Endothelial cell of umbilical vein (primary cell): ENCODE measurements at regions of chr20 and their contacts with region 1.

Region 1: GRCh38 chr20:63707549-63708300 is at the starts of genes ARFRP1 and ZGPAT:
- DNase-seq: peak; percentile 81
- H3K4me3 ChIP-seq: peak within 1 kb of the TSS; percentile 62 to 77 (median 70)
- H3K27ac ChIP-seq: peak within 1 kb of the TSS; percentile 29
- H3K4me1 ChIP-seq: peaks cover 14% of the 10 kb centered on the region
- H3K27me3 ChIP-seq: no peaks in the 10 kb centered on the region
- CTCF ChIP-seq: no peak
- POLR2A ChIP-seq: peak; percentile 44
- total RNA-seq, gene ARFRP1: 51.6 and 56.3 TPM in 2 replicates
- total RNA-seq, gene ZGPAT: 29.3 and 31.7 TPM in 2 replicates

Region 2: DNA sequence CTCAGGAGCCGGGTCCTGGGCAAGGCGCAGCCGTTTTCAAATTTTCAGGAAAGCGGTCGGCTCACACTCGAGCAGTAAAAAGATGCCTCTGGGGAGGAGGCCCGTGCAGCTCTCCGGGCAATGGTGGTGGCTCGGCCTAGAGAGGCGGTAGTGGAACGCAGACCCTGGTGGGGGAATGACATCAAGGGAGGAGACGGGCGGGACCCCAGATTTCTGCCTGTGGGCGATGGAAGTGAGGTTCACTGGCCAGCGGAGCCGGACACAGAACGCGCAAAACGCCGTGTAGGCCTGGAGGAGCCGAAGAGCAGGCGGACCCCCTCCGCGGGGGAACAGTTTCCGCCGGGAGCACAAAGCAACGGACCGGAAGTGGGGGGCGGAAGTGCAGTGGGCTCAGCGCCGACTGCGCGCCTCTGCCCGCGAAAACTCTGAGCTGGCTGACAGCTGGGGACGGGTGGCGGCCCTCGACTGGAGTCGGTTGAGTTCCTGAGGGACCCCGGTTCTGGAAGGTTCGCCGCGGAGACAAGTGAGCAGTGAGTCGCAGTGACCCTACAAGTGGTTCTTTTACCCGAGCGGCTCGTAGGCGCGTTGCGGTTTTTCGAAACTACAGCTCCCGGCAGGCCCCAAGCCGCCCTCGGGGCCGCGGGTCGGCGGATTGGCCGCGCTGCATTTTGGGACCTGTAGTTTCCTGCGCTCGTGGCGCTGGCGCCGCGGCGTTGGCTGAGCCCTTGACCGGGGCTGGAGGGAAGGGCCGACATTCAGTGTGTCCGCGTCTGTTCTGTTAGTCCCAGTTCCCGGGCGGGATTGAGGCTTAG is 49.6 kb before region 1 on chr20 and contains the start of gene RTEL1:
- CTCF ChIA-PET with region 1: interaction called, 8 read pairs
- POLR2A ChIA-PET with region 1: interaction called, 3 read pairs
- dilution Hi-C with region 1: no loop called
- intact Hi-C with region 1: loop called (anchors 2 kb)
- DNase-seq: peak; percentile 93
- H3K4me3 ChIP-seq: peak within 1 kb of the TSS; percentile 60 to 83 (median 62)
- H3K27ac ChIP-seq: peak within 1 kb of the TSS; percentile 50
- H3K4me1 ChIP-seq: peaks cover 10% of the 10 kb centered on the region
- H3K27me3 ChIP-seq: no peaks in the 10 kb centered on the region
- CTCF ChIP-seq: no peak
- POLR2A ChIP-seq: peak; percentile 54
- total RNA-seq, gene RTEL1: 38.6 and 44.9 TPM in 2 replicates

Region 3: DNA sequence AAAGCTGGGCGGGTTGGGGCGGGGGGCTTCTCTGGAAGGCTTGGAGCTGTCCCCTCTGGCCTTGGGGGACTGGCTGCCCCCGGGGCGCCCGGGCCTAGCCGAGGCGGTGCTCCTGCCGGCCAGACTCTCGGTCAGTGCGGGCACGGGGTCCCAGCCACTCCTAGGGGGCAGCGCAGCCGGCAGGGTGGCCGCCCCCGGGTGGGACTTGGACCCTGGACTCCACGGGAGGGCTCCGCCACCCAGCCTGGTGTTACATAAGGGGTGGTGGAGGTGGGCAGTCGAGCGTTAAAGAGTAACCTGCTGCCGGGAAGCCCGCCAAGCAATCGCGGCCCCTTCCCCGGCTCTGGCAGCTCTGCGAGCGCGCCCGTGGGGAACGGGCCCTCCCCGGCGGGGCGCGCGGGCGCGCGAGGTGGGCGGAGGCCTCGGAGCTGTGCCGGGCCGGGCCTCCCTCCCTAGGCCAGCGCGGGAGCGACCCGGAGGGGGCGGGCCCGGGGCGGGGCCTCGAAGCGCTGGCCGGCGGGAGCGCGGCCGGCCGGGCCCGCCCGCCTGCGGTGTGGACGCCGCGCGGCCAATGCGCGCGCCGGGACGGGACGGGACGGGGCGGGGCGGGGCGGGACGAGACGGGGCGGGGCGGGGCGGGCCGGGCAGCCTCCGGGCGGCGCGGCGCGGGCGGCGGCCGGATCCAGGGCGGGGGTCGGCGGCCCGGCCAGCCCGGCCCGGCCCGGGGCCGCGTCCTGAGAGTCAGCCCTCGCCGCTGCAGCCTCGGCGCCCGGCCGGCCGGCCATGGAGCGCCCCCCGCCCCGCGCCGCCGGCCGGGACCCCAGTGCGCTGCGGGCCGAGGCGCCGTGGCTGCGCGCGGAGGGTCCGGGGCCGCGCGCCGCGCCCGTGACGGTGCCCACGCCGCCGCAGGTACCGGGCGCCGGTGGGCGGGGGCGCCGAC is 31.7 kb after region 1 on chr20 and contains the start of gene SLC2A4RG:
- CTCF ChIA-PET with region 1: interaction called, 12 read pairs
- POLR2A ChIA-PET with region 1: no interaction called
- dilution Hi-C with region 1: no loop called
- intact Hi-C with region 1: loop called (anchors 2 kb)
- DNase-seq: peak; percentile 40
- H3K4me3 ChIP-seq: peak within 1 kb of the TSS; percentile 41 to 72 (median 52)
- H3K27ac ChIP-seq: no peak within 1 kb of the TSS
- H3K4me1 ChIP-seq: peaks cover 9% of the 10 kb centered on the region
- H3K27me3 ChIP-seq: no peaks in the 10 kb centered on the region
- CTCF ChIP-seq: no peak
- POLR2A ChIP-seq: no peak
- total RNA-seq, gene SLC2A4RG: 69.3 and 69.4 TPM in 2 replicates

Region 4: DNA sequence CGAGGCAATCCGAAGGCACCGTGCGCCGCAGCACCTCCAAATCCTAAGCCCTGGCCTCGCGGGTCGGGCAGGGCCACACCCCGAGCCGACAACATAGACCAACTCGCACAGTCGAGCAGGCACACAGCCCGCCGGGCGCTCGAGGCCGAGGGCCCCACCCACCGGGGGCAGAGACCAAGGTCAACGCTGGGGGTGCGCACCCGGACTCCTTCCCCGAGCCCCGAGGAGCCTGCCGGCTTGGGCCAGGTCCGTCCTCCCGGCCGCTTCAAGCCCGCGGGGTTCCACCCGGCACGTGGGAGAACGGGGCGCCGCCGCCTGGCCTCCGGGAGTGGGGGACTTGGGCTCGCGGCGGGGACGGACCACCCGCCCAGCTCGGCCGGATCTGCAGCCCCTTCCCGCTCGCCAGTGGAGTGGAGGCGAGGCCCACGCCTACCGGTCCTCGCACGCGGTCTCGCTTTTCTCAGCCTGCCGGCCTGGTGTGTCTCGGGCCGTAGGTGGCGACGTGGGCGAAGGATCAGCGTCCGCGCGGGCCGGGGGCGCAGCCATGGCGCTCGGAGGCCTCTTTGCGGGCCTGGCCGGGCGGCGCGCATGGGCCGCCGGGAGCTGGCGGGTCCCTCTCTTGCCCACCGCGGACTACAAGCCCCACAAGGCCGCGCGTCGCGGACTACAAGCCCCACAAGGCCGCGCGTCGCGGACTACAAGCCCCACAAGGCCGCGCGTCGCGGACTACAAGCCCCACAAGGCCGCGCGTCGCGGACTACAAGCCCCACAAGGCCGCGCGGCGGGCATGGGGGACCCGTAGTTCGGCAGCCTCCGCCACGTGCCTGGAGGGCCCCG is 248.3 kb after region 1 on chr20 and contains the start of gene UCKL1:
- CTCF ChIA-PET with region 1: no interaction called
- POLR2A ChIA-PET with region 1: no interaction called
- dilution Hi-C with region 1: no loop called
- intact Hi-C with region 1: loop called (anchors 5 kb)
- DNase-seq: peak; percentile 93
- H3K4me3 ChIP-seq: peak within 1 kb of the TSS; percentile 38 to 78 (median 76)
- H3K27ac ChIP-seq: peak within 1 kb of the TSS; percentile 42
- H3K4me1 ChIP-seq: peaks cover 10% of the 10 kb centered on the region
- H3K27me3 ChIP-seq: no peaks in the 10 kb centered on the region
- CTCF ChIP-seq: no peak
- POLR2A ChIP-seq: peak; percentile 89
- total RNA-seq, gene UCKL1: 51.1 TPM in 2 replicates